IMR-90 (cell line): ENCODE measurements at regions of chr12 and their contacts with region 1.

Region 1: DNA sequence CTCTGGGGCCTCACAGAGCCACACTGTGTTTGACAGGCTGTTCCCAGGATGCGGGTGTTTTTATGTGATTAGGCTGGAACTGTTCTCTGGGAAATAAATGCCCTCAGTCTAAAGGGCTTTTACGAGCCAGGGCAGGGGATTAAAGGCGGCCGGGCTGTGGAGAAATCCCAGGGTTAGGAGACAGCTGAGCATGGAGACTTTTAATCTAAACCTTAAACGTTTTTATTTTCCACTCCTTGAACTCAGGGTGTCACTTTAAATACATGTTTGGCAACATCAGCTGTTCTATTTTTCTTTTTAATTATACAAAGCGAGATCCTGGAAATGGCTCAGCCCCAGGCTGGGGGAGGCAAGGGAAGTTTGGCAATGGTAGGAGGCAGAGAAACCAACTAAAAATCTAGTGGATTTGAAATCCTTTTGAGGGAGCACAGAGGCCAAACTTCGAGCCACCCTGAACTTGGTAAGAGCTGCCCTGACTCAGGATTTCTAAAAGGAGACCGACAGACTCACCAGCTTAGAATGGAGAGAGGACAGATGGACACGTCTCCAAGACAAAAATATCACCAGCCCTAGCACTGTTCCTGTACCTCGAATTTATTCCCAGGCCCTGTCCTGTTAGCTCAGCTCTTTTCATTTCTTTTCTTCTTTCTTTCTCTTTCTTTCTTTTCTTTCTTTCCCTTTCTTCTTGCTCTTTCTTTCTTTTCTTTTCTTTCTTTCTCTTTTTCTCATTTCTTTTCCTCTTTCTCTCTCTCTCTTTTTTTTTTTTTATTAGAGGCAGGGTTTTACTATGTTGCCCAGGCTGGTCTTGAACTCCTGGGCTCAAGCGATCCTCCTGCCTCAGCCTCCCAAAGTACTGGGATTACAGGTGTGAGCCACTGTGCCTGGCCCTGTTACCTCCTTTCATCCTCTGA is 15.8 kb upstream of the ORAI1 start:
- DNase-seq: peak; percentile 43
- ATAC-seq: peak; percentile 76
- H3K4me3 ChIP-seq: no peak overlapping the region
- H3K27ac ChIP-seq: peak overlapping the region; percentile 39; the same call in 1 of the 2 replicates
- H3K4me1 ChIP-seq: peaks cover 4% of the 10 kb centered on the region; the same call in 1 of the 2 replicates
- H3K27me3 ChIP-seq: no peaks in the 10 kb centered on the region
- CTCF ChIP-seq: no peak
- POLR2A ChIP-seq: no peak
- RAD21 ChIP-seq: no peak

Region 2: GRCh38 chr12:121536899-121537813 is 73.3 kb before region 1 on chr12:
- CTCF ChIA-PET with region 1: no interaction called
- POLR2A ChIA-PET with region 1: interaction called, 25 read pairs
- dilution Hi-C with region 1: no loop called
- in situ Hi-C with region 1: no loop called
- intact Hi-C with region 1: no loop called
- DNase-seq: peak; percentile 77
- ATAC-seq: peak; percentile 35
- H3K4me3 ChIP-seq: peak overlapping the region; percentile 11
- H3K27ac ChIP-seq: peak overlapping the region; percentile 49
- H3K4me1 ChIP-seq: peaks cover 31% of the 10 kb centered on the region
- H3K27me3 ChIP-seq: no peaks in the 10 kb centered on the region
- CTCF ChIP-seq: no peak
- POLR2A ChIP-seq: no peak
- RAD21 ChIP-seq: no peak

Region 3: DNA sequence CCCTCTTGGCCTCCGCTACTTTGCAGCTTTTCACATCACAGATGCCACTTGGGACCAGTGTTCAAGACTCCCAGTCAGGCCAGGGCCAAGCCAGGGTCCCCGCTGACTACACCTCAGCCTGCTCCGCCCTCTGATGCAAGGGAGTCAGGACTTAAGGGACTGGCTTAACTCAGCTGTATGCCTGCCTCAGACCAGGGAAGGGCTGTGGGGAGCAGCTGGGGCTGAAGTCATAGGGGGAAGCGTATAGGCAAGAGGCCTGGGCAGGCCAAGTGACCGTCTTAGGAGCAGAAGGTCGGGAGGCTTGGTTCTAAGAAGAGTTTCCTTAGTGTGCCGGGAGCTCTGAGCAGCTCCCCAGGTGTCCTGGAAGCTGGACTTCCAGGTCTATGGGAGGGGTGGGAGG is 51.5 kb before region 1 on chr12:
- CTCF ChIA-PET with region 1: no interaction called
- POLR2A ChIA-PET with region 1: no interaction called
- dilution Hi-C with region 1: no loop called
- in situ Hi-C with region 1: no loop called
- intact Hi-C with region 1: loop called (anchors 5 kb)
- DNase-seq: no peak
- ATAC-seq: no peak
- H3K4me3 ChIP-seq: no peak overlapping the region
- H3K27ac ChIP-seq: no peak overlapping the region
- H3K4me1 ChIP-seq: no peaks in the 10 kb centered on the region
- H3K27me3 ChIP-seq: no peaks in the 10 kb centered on the region
- CTCF ChIP-seq: no peak
- POLR2A ChIP-seq: no peak
- RAD21 ChIP-seq: no peak

Region 4: GRCh38 chr12:121773011-121773777 is 162.7 kb after region 1 on chr12:
- CTCF ChIA-PET with region 1: no interaction called
- POLR2A ChIA-PET with region 1: no interaction called
- dilution Hi-C with region 1: no loop called
- in situ Hi-C with region 1: no loop called
- intact Hi-C with region 1: no loop called
- DNase-seq: peak; percentile 58
- ATAC-seq: peak; percentile 86
- H3K4me3 ChIP-seq: no peak overlapping the region
- H3K27ac ChIP-seq: no peak overlapping the region
- H3K4me1 ChIP-seq: peaks cover 6% of the 10 kb centered on the region
- H3K27me3 ChIP-seq: no peaks in the 10 kb centered on the region
- CTCF ChIP-seq: peak; percentile 85
- POLR2A ChIP-seq: no peak
- RAD21 ChIP-seq: peak; percentile 93